Activated naive CD4-positive, alpha-beta T cell treated with anti-CD3 and anti-CD28 coated beads, Interleukin-2, amount 10 ng/mL, durations not matched to agents 7 days and 5 days (primary cell): ENCODE measurements at regions of chr6 and their contacts with region 1.

Region 1: GRCh38 chr6:28981833-28982475 is 23.2 kb downstream of the ZNF311 start:
- DNase-seq: peak; percentile 73
- H3K4me3 Mint-ChIP-seq: peak overlapping the region; percentile 80
- H3K27ac Mint-ChIP-seq: peak overlapping the region; percentile 91
- H3K4me1 Mint-ChIP-seq: peaks cover 67% of the 10 kb centered on the region
- H3K27me3 Mint-ChIP-seq: peaks cover 68% of the 10 kb centered on the region

Region 2: GRCh38 chr6:28933069-28933468 is 48.9 kb before region 1 on chr6:
- CTCF ChIA-PET with region 1: no interaction called
- DNase-seq: no peak
- H3K4me3 Mint-ChIP-seq: no peak overlapping the region
- H3K27ac Mint-ChIP-seq: no peak overlapping the region
- H3K4me1 Mint-ChIP-seq: peaks cover 13% of the 10 kb centered on the region
- H3K27me3 Mint-ChIP-seq: peaks cover 21% of the 10 kb centered on the region

Region 3: GRCh38 chr6:29016559-29017427 is 34.8 kb after region 1 on chr6:
- CTCF ChIA-PET with region 1: interaction called, 20 read pairs
- DNase-seq: peak; percentile 88
- H3K4me3 Mint-ChIP-seq: peak overlapping the region; percentile 85
- H3K27ac Mint-ChIP-seq: peak overlapping the region; percentile 88
- H3K4me1 Mint-ChIP-seq: peaks cover 26% of the 10 kb centered on the region
- H3K27me3 Mint-ChIP-seq: peaks cover 23% of the 10 kb centered on the region

Region 4: DNA sequence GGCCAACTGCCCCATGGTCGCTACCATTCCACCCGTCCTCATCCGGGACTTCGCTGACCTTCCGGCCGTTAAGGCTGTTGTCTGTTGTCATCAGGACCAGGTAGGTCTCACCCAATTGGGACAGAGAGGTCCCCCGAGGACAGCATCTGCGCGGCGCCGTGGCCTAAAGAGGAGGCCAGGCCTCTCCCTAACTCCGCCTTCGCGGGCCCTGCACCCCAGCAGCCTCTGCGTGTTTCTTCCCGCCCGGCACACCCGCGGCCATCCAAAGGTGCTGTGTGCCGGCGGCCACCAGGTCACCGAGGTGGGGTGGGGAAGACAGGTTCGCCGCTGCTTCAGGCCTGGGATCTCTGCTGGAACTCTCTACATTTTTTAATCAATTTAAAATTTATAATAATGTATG is 54.0 kb after region 1 on chr6:
- CTCF ChIA-PET with region 1: no interaction called
- DNase-seq: no peak
- H3K4me3 Mint-ChIP-seq: no peak overlapping the region
- H3K27ac Mint-ChIP-seq: no peak overlapping the region
- H3K4me1 Mint-ChIP-seq: no peaks in the 10 kb centered on the region
- H3K27me3 Mint-ChIP-seq: peaks cover 10% of the 10 kb centered on the region

Region 5: GRCh38 chr6:29146154-29146553 is 164.2 kb after region 1 on chr6:
- CTCF ChIA-PET with region 1: no interaction called
- DNase-seq: no peak
- H3K4me3 Mint-ChIP-seq: no peak overlapping the region
- H3K27ac Mint-ChIP-seq: no peak overlapping the region
- H3K4me1 Mint-ChIP-seq: no peaks in the 10 kb centered on the region
- H3K27me3 Mint-ChIP-seq: no peaks in the 10 kb centered on the region